Panc1 (cell line): ENCODE measurements at regions of chr16 and their contacts with region 1.

Region 1: GRCh38 chr16:22927306-22927705 is 113.3 kb downstream of the HS3ST2 start:
- DNase-seq: no peak
- ATAC-seq: no peak
- H3K4me3 ChIP-seq: no peak overlapping the region
- H3K27ac ChIP-seq: no peak overlapping the region
- H3K4me1 ChIP-seq: no peaks in the 10 kb centered on the region
- H3K27me3 ChIP-seq: peaks cover 27% of the 10 kb centered on the region
- CTCF ChIP-seq: no peak

Region 2: DNA sequence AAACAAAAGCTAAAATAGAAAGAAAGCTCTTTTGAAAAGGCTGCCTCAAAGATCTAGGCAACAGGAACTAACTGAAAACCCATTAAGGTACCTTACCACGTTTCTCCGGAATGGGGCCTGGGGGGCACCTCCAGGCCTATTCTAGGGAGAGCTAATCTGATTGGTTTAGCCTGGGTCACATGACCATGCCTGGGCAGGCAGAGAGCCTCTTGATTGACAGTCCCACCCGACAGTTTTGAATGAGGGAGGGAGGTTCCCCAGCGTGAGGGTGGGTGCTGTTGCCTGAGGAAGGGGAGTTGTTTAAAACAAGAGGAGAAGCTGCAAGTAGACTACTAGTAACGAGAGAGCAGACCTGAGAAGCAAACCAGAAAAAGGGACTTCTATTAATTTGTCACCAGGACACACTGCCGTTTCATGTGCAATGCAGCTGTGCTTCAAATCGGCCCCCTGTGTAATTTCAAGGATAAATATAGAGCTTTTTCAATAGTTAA is 256.7 kb before region 1 on chr16:
- CTCF ChIA-PET with region 1: no interaction called
- POLR2A ChIA-PET with region 1: interaction called, 11 read pairs
- in situ Hi-C with region 1: no loop called
- intact Hi-C with region 1: no loop called
- DNase-seq: no peak
- ATAC-seq: 0 out of 2 replicates have a peak, but pooled peaks have one; percentile 68
- H3K4me3 ChIP-seq: no peak overlapping the region
- H3K27ac ChIP-seq: no peak overlapping the region
- H3K4me1 ChIP-seq: no peaks in the 10 kb centered on the region
- H3K27me3 ChIP-seq: peaks cover 20% of the 10 kb centered on the region
- CTCF ChIP-seq: no peak